Heart left ventricle (tissue), 16 donors: ENCODE measurements at regions of chr20 and their contacts with region 1.

Region 1: GRCh38 chr20:41136680-41137613 is at the start of gene PLCG1:
- DNase-seq: peak; percentile 91 to 95 (median 93)
- ATAC-seq: peak; percentile 76 to 89 (median 85)
- H3K4me3 ChIP-seq: peak within 1 kb of the TSS; percentile 56 to 100 (median 94)
- H3K27ac ChIP-seq: peak within 1 kb of the TSS; percentile 89 to 100 (median 98)
- H3K4me1 ChIP-seq: peaks cover 6 to 52% (median 43%) of the 10 kb centered on the region in 12 donors
- H3K27me3 ChIP-seq: peaks cover 0 to 4% (median 0%) of the 10 kb centered on the region in 9 donors
- CTCF ChIP-seq: peak in 1 of 12 donors; percentile 12
- POLR2A ChIP-seq: peak; percentile 38 to 85
- total RNA-seq, gene PLCG1: 32.5 to 72.2 (median 55.9) TPM

Region 2: GRCh38 chr20:41173161-41173721 is 36.3 kb after region 1 on chr20:
- intact Hi-C with region 1: loop called in 4 of 10 experiments (anchors 2 to 5 kb)
- DNase-seq: peak; percentile 85 to 92 (median 87)
- ATAC-seq: peak; percentile 66 to 83 (median 80)
- H3K4me3 ChIP-seq: no peak overlapping the region
- H3K27ac ChIP-seq: peak overlapping the region; percentile 68 to 93 (median 84)
- H3K4me1 ChIP-seq: peaks cover 14 to 71% (median 54%) of the 10 kb centered on the region in 12 donors
- H3K27me3 ChIP-seq: no peaks in the 10 kb centered on the region
- CTCF ChIP-seq: peak; percentile 96 to 99 (median 98)
- POLR2A ChIP-seq: no peak

Region 3: DNA sequence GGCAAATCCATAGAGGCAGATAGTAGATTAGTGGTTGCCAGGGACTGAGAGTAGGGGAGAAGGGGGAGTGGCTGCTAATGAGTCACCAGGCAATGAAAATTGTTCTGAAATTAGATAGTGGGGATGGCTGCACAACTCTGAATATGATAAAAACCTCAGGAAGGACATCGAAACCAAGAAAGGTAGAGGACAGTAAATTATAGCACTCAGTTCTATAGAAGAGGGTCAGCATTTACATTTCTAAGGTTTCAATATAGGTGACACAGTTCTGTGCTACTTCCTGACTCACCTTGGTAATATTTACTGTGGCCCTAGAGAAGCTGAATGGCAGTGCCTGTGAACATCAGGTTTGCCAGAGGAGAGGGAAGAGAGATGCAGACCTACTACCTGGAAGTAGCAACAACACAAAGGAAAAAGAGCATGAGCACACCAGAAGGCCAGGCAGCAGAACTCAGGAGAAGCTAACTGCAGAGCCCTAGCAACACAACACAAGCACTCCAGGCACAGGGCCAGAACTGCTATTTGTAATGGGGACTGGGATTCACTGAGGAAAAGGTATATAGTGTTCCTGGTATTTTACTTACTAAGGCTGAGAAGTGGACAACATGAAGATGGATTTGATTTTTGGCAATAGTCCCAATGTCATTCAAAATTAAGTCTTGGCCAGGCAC is 76.3 kb after region 1 on chr20:
- intact Hi-C with region 1: no loop called
- DNase-seq: peak in 3 of 5 donors; percentile 40 to 62 (median 49)
- ATAC-seq: peak; percentile 68 to 90 (median 80)
- H3K4me3 ChIP-seq: no peak overlapping the region
- H3K27ac ChIP-seq: no peak overlapping the region
- H3K4me1 ChIP-seq: peaks cover 0 to 18% (median 10%) of the 10 kb centered on the region in 12 donors
- H3K27me3 ChIP-seq: no peaks in the 10 kb centered on the region
- CTCF ChIP-seq: no peak
- POLR2A ChIP-seq: no peak

Region 4: DNA sequence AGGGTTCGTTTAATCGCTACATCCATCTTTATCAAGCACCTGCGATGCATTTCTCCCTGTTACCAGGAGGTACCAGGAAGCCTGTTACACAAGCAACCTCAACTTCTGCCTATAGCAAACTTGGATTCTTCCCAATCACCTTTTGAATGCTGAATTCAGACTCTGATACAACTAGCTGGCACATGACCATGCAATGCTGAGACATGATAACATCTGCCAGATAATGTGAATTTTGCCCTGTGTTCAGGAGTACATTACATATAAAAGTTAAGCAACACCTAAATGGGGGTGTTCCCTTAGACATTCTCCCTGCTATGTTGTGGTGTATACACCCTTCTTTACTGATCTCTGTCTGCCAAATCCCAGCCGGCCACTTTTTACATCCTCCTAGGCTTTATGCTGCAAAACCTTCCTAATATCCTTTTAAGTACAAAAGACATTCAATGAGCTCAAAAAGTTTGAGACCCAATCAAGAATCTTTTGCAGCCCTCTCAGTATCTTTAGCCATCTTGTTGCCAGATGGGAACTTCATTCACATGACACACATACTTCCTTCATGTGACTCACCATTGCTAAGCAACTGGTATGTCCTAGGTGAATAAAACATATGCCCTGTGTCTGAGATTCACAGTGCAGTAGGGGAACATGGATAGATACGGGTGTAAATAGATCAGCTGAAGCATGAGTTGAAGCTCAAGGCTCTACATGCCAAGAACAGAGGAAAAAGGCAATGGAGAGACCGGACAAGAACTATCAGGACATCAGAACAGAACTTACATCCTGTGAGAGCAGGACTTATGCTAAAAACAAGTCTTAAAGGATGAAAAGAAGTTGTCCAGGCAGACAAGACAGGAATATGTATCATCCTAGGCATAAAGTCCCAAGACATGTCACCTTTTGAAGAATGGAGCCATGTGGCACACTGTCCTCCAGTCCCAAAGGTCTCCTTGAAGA is 96.3 kb after region 1 on chr20:
- intact Hi-C with region 1: loop called in 3 of 10 experiments (anchors 2 to 5 kb)
- DNase-seq: no peak
- ATAC-seq: peak in 3 of 4 donors; percentile 35 to 62 (median 55)
- H3K4me3 ChIP-seq: peak overlapping the region in 3 of 12 donors; percentile 18 to 33 (median 31)
- H3K27ac ChIP-seq: peak overlapping the region; percentile 41 to 83 (median 76)
- H3K4me1 ChIP-seq: peaks cover 15 to 68% (median 50%) of the 10 kb centered on the region in 12 donors
- H3K27me3 ChIP-seq: no peaks in the 10 kb centered on the region
- CTCF ChIP-seq: no peak
- POLR2A ChIP-seq: no peak

Region 5: GRCh38 chr20:41411391-41411847 is 274.5 kb after region 1 on chr20:
- intact Hi-C with region 1: loop called in 3 of 10 experiments (anchors 5 to 10 kb)
- DNase-seq: no peak
- ATAC-seq: peak; percentile 69 to 87 (median 78)
- H3K4me3 ChIP-seq: no peak overlapping the region
- H3K27ac ChIP-seq: peak overlapping the region; percentile 67 to 89 (median 73)
- H3K4me1 ChIP-seq: peaks cover 3 to 55% (median 28%) of the 10 kb centered on the region in 12 donors
- H3K27me3 ChIP-seq: no peaks in the 10 kb centered on the region
- CTCF ChIP-seq: peak; percentile 30 to 68 (median 58)
- POLR2A ChIP-seq: no peak